Breast epithelium (tissue), 4 donors: ENCODE measurements at regions of chr10 and their contacts with region 1.

Region 1: GRCh38 chr10:86688398-86688921 is 20.1 kb downstream of the LDB3 start:
- DNase-seq: peak in 1 of 2 donors; percentile 33
- H3K4me3 ChIP-seq: no peak overlapping the region
- H3K27ac ChIP-seq: no peak overlapping the region
- H3K4me1 ChIP-seq: no peaks in the 10 kb centered on the region
- H3K27me3 ChIP-seq: no peaks in the 10 kb centered on the region
- CTCF ChIP-seq: peak; percentile 49 to 88 (median 80)
- POLR2A ChIP-seq: no peak

Region 2: DNA sequence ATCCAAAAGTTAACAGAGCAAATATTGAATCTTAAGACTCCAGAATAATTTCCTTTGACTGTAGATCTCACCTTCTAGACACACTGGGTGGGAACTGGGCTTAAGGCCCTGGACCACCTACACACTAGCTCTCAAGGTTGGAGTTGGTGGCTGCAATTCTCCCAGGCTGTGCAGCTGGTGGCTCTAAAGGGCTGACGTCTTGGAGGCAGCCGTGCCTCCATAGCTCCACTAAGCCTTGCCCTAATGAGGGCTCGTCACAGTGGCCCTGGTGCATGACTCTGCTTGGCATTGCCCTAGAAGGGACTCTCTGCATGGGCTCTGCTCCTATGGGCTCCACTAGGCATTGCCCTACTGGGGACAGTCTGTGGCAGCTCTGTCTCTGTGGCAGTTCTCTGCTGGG is 1354.9 kb before region 1 on chr10:
- intact Hi-C with region 1: no loop called
- DNase-seq: no peak
- H3K4me3 ChIP-seq: no peak overlapping the region
- H3K27ac ChIP-seq: no peak overlapping the region
- H3K4me1 ChIP-seq: no peaks in the 10 kb centered on the region
- H3K27me3 ChIP-seq: no peaks in the 10 kb centered on the region
- CTCF ChIP-seq: no peak
- POLR2A ChIP-seq: no peak

Region 3: GRCh38 chr10:86652361-86653202 is 35.9 kb before region 1 on chr10:
- intact Hi-C with region 1: no loop called
- DNase-seq: peak in 1 of 2 donors; percentile 40
- H3K4me3 ChIP-seq: no peak overlapping the region
- H3K27ac ChIP-seq: no peak overlapping the region
- H3K4me1 ChIP-seq: no peaks in the 10 kb centered on the region
- H3K27me3 ChIP-seq: no peaks in the 10 kb centered on the region
- CTCF ChIP-seq: no peak
- POLR2A ChIP-seq: no peak

Region 4: GRCh38 chr10:86899670-86900276 is 211.3 kb after region 1 on chr10:
- intact Hi-C with region 1: loop called (anchors 10 kb)
- DNase-seq: peak; percentile 56 to 65
- H3K4me3 ChIP-seq: no peak overlapping the region
- H3K27ac ChIP-seq: no peak overlapping the region
- H3K4me1 ChIP-seq: no peaks in the 10 kb centered on the region
- H3K27me3 ChIP-seq: no peaks in the 10 kb centered on the region
- CTCF ChIP-seq: peak; percentile 54 to 85 (median 83)
- POLR2A ChIP-seq: no peak